ENCODE measurements at regions of chr11 and their contacts with region 1.

Region 1: DNA sequence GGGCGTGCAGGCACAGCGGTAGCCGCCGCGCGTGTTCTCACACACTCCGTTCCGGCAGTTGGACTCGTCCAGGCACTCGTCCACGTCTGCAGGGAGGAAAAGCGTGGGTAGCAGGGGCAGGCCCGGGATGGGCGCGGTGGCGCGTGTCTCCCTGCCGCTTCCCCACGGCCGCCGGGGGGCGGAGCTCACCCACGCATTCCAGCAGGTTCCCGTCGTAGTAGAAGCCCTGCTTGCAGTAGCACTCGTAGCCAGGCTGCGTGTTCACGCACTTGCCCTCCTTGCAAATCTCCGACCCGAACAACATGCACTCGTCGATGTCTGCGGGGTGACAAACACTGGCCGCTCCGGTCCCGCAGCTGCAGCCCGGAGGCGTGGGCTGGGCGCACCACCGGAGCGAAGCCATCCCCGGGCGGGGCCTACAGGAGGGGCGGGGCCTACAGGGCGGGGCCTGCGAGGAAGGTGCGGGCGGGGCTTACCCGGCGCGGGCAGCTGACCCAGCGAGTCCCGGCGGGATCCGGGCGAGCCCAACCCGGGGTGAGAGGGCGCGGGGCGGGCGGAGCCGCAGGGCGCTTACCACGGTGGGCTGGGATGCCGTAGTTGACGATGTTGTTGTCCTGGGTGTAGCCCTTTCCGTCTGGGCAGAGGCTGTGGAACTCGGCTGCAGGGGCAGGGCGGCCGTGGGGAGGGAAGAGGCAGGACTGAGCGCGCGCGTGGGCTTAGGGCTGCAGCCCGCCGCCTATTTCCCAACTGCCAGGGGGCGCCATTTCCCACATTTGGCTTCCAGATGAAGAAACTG is 15.6 kb downstream of the SCYL1 start:
- DNase-seq: peak; percentile 90 to 95 (median 91)
- H3K4me3 ChIP-seq: peak overlapping the region; percentile 73 to 91
- H3K4me3 Mint-ChIP-seq: peak overlapping the region; percentile 82 to 90 (median 87)
- H3K27ac ChIP-seq: peak overlapping the region; percentile 55
- H3K27ac Mint-ChIP-seq: peak overlapping the region; percentile 81 to 95 (median 87)
- H3K4me1 ChIP-seq: peaks cover 17% of the 10 kb centered on the region
- H3K4me1 Mint-ChIP-seq: peaks cover 12 to 36% (median 16%) of the 10 kb centered on the region in 4 donors
- H3K27me3 ChIP-seq: no peaks in the 10 kb centered on the region
- H3K27me3 Mint-ChIP-seq: no peaks in the 10 kb centered on the region

Region 2: GRCh38 chr11:65060913-65061408 is 479.5 kb before region 1 on chr11:
- CTCF ChIA-PET with region 1: no interaction called
- POLR2A ChIA-PET with region 1: no interaction called
- intact Hi-C with region 1: no loop called
- DNase-seq: no peak
- H3K4me3 ChIP-seq: no peak overlapping the region
- H3K4me3 Mint-ChIP-seq: no peak overlapping the region
- H3K27ac ChIP-seq: no peak overlapping the region
- H3K27ac Mint-ChIP-seq: peak overlapping the region in 2 of 7 donors; percentile 35 to 75
- H3K4me1 ChIP-seq: peaks cover 10% of the 10 kb centered on the region
- H3K4me1 Mint-ChIP-seq: no peaks in the 10 kb centered on the region
- H3K27me3 ChIP-seq: no peaks in the 10 kb centered on the region
- H3K27me3 Mint-ChIP-seq: peaks cover 0 to 3% of the 10 kb centered on the region in 2 donors

Region 3: GRCh38 chr11:65530157-65530496 is 10.4 kb before region 1 on chr11:
- CTCF ChIA-PET with region 1: interaction called, 19 read pairs
- POLR2A ChIA-PET with region 1: interaction called, 77 read pairs
- intact Hi-C with region 1: loop called (anchors 1 kb)
- DNase-seq: peak in 2 of 5 donors; percentile 33 to 61
- H3K4me3 ChIP-seq: no peak overlapping the region
- H3K4me3 Mint-ChIP-seq: peak overlapping the region in 2 of 8 donors; percentile 23 to 48
- H3K27ac ChIP-seq: no peak overlapping the region
- H3K27ac Mint-ChIP-seq: peak overlapping the region; percentile 33 to 88 (median 71)
- H3K4me1 ChIP-seq: peaks cover 30% of the 10 kb centered on the region
- H3K4me1 Mint-ChIP-seq: peaks cover 14 to 38% (median 24%) of the 10 kb centered on the region in 4 donors
- H3K27me3 ChIP-seq: no peaks in the 10 kb centered on the region
- H3K27me3 Mint-ChIP-seq: no peaks in the 10 kb centered on the region

Region 4: GRCh38 chr11:65558002-65558931 is 17.8 kb after region 1 on chr11 and contains the start of gene LTBP3:
- CTCF ChIA-PET with region 1: interaction called, 71 read pairs
- POLR2A ChIA-PET with region 1: interaction called, 65 read pairs
- intact Hi-C with region 1: no loop called
- DNase-seq: peak in 3 of 5 donors; percentile 42 to 54 (median 44)
- H3K4me3 ChIP-seq: peak within 1 kb of the TSS; percentile 52
- H3K4me3 Mint-ChIP-seq: peak within 1 kb of the TSS; percentile 87 to 94 (median 91)
- H3K27ac ChIP-seq: peak within 1 kb of the TSS; percentile 70
- H3K27ac Mint-ChIP-seq: peak within 1 kb of the TSS; percentile 85 to 97 (median 93)
- H3K4me1 ChIP-seq: peaks cover 65% of the 10 kb centered on the region
- H3K4me1 Mint-ChIP-seq: peaks cover 39 to 66% (median 53%) of the 10 kb centered on the region in 4 donors
- H3K27me3 ChIP-seq: no peaks in the 10 kb centered on the region
- H3K27me3 Mint-ChIP-seq: no peaks in the 10 kb centered on the region
- total RNA-seq, gene LTBP3: 201 to 211 TPM

Region 5: GRCh38 chr11:65588199-65589054 is 47.9 kb after region 1 on chr11:
- CTCF ChIA-PET with region 1: interaction called, 124 read pairs
- POLR2A ChIA-PET with region 1: interaction called, 110 read pairs
- intact Hi-C with region 1: loop called (anchors 1 kb)
- DNase-seq: peak; percentile 78 to 82 (median 78)
- H3K4me3 ChIP-seq: no peak overlapping the region
- H3K4me3 Mint-ChIP-seq: peak overlapping the region in 3 of 8 donors; percentile 11 to 46 (median 25)
- H3K27ac ChIP-seq: peak overlapping the region; percentile 57
- H3K27ac Mint-ChIP-seq: peak overlapping the region; percentile 77 to 91 (median 87)
- H3K4me1 ChIP-seq: peaks cover 17% of the 10 kb centered on the region
- H3K4me1 Mint-ChIP-seq: peaks cover 13 to 33% (median 20%) of the 10 kb centered on the region in 4 donors
- H3K27me3 ChIP-seq: no peaks in the 10 kb centered on the region
- H3K27me3 Mint-ChIP-seq: no peaks in the 10 kb centered on the region

Region 6: DNA sequence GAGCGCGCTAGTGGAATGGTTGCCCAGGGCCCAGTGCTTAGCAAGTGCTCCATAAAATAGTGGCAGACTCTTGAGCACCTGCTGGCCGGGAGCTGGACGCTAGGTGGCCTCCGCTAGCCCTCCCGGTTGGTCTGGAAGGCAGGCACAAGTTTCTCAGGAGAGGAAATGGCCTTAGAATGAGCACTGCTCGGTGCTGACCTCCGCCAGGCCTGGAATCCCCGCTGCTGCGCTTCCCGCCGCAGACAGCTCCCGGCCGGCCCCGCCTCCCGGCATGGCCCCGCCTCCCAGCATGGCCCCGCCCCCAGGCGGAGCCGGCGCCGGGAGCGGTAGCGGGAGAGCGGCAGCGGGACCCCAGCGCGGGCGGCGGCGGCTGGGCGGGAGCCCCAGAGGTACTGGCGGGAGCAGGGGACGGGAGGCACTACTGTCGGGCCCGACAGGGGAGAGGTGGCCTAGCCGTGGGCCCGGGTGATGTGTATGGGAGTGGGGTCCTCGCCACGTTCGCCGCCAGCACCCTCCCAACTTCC is 97.4 kb after region 1 on chr11 and contains the start of gene SIPA1:
- CTCF ChIA-PET with region 1: no interaction called
- POLR2A ChIA-PET with region 1: no interaction called
- intact Hi-C with region 1: loop called (anchors 1 kb)
- DNase-seq: peak; percentile 63 to 85 (median 74)
- H3K4me3 ChIP-seq: peak within 1 kb of the TSS; percentile 72 to 86
- H3K4me3 Mint-ChIP-seq: peak within 1 kb of the TSS; percentile 90 to 98 (median 96)
- H3K27ac ChIP-seq: peak within 1 kb of the TSS; percentile 94
- H3K27ac Mint-ChIP-seq: peak within 1 kb of the TSS; percentile 97 to 100 (median 99)
- H3K4me1 ChIP-seq: peaks cover 71% of the 10 kb centered on the region
- H3K4me1 Mint-ChIP-seq: peaks cover 24 to 68% (median 46%) of the 10 kb centered on the region in 4 donors
- H3K27me3 ChIP-seq: no peaks in the 10 kb centered on the region
- H3K27me3 Mint-ChIP-seq: no peaks in the 10 kb centered on the region
- total RNA-seq, gene SIPA1: 150 to 169 TPM